B cell (primary cell): ENCODE measurements at regions of chr12 and their contacts with region 1.

Region 1: GRCh38 chr12:7806863-7807487 is 17.8 kb downstream of the NANOG start:
- DNase-seq: peak; percentile 57
- ATAC-seq: no peak
- H3K4me3 ChIP-seq: no peak overlapping the region
- H3K4me3 Mint-ChIP-seq: no peak overlapping the region
- H3K27ac ChIP-seq: no peak overlapping the region
- H3K27ac Mint-ChIP-seq: no peak overlapping the region
- H3K4me1 ChIP-seq: no peaks in the 10 kb centered on the region
- H3K4me1 Mint-ChIP-seq: no peaks in the 10 kb centered on the region
- H3K27me3 ChIP-seq: no peaks in the 10 kb centered on the region
- H3K27me3 Mint-ChIP-seq: peaks cover 4% of the 10 kb centered on the region
- CTCF ChIP-seq: peak; percentile 88

Region 2: GRCh38 chr12:7219599-7220243 is 587.3 kb before region 1 on chr12:
- CTCF ChIA-PET with region 1: interaction called, 3 read pairs
- POLR2A ChIA-PET with region 1: no interaction called
- intact Hi-C with region 1: loop called (anchors 5 kb)
- DNase-seq: peak; percentile 76
- ATAC-seq: peak; percentile 43
- H3K4me3 ChIP-seq: no peak overlapping the region
- H3K4me3 Mint-ChIP-seq: no peak overlapping the region
- H3K27ac ChIP-seq: no peak overlapping the region
- H3K27ac Mint-ChIP-seq: no peak overlapping the region
- H3K4me1 ChIP-seq: no peaks in the 10 kb centered on the region
- H3K4me1 Mint-ChIP-seq: no peaks in the 10 kb centered on the region
- H3K27me3 ChIP-seq: no peaks in the 10 kb centered on the region
- H3K27me3 Mint-ChIP-seq: peaks cover 3% of the 10 kb centered on the region
- CTCF ChIP-seq: peak; percentile 94

Region 3: DNA sequence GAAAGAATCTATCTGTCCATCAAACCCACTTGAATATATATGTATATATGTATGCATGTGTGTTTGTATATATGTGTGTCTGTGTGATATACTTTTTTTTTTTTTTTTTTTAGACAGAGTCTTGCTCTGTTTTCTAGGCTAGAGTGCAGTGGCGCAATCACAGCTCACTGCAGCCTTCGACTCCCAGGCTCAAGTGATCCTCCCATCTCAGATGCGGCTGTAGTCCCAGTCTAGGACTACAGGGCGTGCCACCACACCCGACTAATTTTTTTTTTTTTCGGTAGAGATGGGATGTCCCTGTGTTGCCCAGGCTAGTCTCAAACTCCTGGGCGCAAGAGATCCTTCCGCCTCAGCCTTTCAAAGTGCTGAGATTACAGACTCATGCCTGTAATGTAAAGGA is 128.2 kb before region 1 on chr12:
- CTCF ChIA-PET with region 1: interaction called, 3 read pairs
- POLR2A ChIA-PET with region 1: no interaction called
- intact Hi-C with region 1: loop called (anchors 1 kb)
- DNase-seq: no peak
- ATAC-seq: no peak
- H3K4me3 ChIP-seq: no peak overlapping the region
- H3K4me3 Mint-ChIP-seq: no peak overlapping the region
- H3K27ac ChIP-seq: no peak overlapping the region
- H3K27ac Mint-ChIP-seq: no peak overlapping the region
- H3K4me1 ChIP-seq: peaks cover 17 to 24% of the 10 kb centered on the region in 2 donors
- H3K4me1 Mint-ChIP-seq: peaks cover 21% of the 10 kb centered on the region
- H3K27me3 ChIP-seq: no peaks in the 10 kb centered on the region
- H3K27me3 Mint-ChIP-seq: no peaks in the 10 kb centered on the region
- CTCF ChIP-seq: no peak

Region 4: DNA sequence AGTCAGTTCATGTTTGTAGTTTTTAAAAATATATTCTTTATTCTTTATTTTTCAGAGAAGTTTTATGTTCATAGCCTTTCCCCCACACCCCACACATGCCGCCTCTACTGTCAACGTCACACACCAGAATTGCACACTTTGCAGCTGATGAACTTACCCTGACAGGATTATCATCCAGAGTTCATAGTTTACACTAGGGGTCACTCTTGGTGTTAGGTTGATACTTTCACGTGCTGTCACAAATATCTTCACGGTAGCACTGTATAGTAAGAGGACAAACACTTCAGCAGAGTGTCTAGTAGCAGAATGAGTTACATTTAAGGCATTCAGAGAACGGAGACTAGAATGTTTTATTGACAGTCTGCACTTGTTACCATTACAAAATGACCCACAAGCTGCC is 90.6 kb before region 1 on chr12:
- CTCF ChIA-PET with region 1: interaction called, 11 read pairs
- POLR2A ChIA-PET with region 1: no interaction called
- intact Hi-C with region 1: no loop called
- DNase-seq: peak; percentile 14
- ATAC-seq: no peak
- H3K4me3 ChIP-seq: no peak overlapping the region
- H3K4me3 Mint-ChIP-seq: no peak overlapping the region
- H3K27ac ChIP-seq: no peak overlapping the region
- H3K27ac Mint-ChIP-seq: no peak overlapping the region
- H3K4me1 ChIP-seq: no peaks in the 10 kb centered on the region
- H3K4me1 Mint-ChIP-seq: no peaks in the 10 kb centered on the region
- H3K27me3 ChIP-seq: no peaks in the 10 kb centered on the region
- H3K27me3 Mint-ChIP-seq: peaks cover 5% of the 10 kb centered on the region
- CTCF ChIP-seq: no peak